ENCODE measurements at regions of chr17 and their contacts with region 1.

Region 1: GRCh38 chr17:42779936-42780850 is at the start of gene WNK4:
- DNase-seq: peak; percentile 98
- ATAC-seq: peak; percentile 88
- H3K4me3 ChIP-seq: peak within 1 kb of the TSS; percentile 87 to 99 (median 92)
- H3K27ac ChIP-seq: peak within 1 kb of the TSS; percentile 98
- H3K4me1 ChIP-seq: peaks cover 64% of the 10 kb centered on the region
- H3K27me3 ChIP-seq: no peaks in the 10 kb centered on the region; a peak in 1 of 5 replicates
- CTCF ChIP-seq: 0 out of 2 replicates have a peak, but pooled peaks have one; percentile 42
- EP300 ChIP-seq: peak in 1 of 2 experiments; percentile 92; a peak in 3 of 4 replicates
- POLR2A ChIP-seq: peak; percentile 90
- RAD21 ChIP-seq: peak; percentile 17
- total RNA-seq, gene WNK4: 1.5 and 2.7 TPM in 2 replicates

Region 2: GRCh38 chr17:42706732-42707131 is 73.5 kb before region 1 on chr17:
- CTCF ChIA-PET with region 1: no interaction called
- POLR2A ChIA-PET with region 1: no interaction called
- in situ Hi-C with region 1: no loop called
- intact Hi-C with region 1: no loop called
- DNase-seq: no peak
- ATAC-seq: no peak
- H3K4me3 ChIP-seq: no peak overlapping the region
- H3K27ac ChIP-seq: no peak overlapping the region
- H3K4me1 ChIP-seq: no peaks in the 10 kb centered on the region
- H3K27me3 ChIP-seq: no peaks in the 10 kb centered on the region
- CTCF ChIP-seq: no peak
- EP300 ChIP-seq: no peak
- POLR2A ChIP-seq: no peak
- RAD21 ChIP-seq: no peak

Region 3: DNA sequence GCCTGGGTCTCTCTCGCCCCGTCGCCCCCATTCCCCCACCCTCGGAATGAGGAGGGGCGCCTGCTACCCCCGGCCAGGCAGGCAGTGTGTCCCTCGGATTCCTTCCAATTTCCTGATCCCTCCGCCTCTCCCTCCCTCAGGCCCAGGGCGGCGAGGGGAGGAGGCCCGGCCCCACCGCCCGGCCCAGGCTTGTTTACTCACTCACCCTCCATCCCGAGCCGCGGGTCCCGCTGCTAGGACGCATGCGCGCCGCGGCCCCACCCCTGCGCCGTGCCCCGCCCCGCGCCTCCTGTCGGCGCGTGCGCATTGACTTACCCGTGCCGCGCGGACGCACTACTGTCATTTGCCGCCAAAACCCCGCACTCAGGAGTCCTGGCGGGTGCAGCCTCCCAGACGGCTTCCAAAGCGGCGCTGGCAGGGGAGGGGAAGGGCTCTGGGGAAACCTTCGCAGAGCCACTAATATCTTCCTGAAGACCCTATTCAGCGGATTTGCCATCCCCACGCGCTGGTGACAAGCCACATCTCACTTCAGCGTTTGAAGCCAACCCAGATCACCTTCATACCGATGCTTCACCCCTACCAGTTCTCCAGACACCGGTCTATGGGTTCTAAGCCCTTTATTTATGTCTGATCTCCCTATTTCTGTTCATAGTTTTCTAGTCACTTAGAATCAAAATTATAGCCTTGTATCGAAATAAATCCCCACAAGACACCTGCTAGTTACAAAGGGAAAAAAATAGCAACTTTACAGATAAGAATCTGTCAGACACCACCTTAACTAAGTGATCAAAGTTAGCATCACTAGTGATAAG is 35.2 kb before region 1 on chr17 and contains the start of gene EZH1:
- CTCF ChIA-PET with region 1: no interaction called
- POLR2A ChIA-PET with region 1: interaction called, 31 read pairs
- in situ Hi-C with region 1: no loop called
- intact Hi-C with region 1: no loop called
- DNase-seq: peak; percentile 91
- ATAC-seq: peak; percentile 89
- H3K4me3 ChIP-seq: peak within 1 kb of the TSS; percentile 58 to 84 (median 76)
- H3K27ac ChIP-seq: peak within 1 kb of the TSS; percentile 83
- H3K4me1 ChIP-seq: peaks cover 62% of the 10 kb centered on the region
- H3K27me3 ChIP-seq: no peaks in the 10 kb centered on the region
- CTCF ChIP-seq: no peak; the same call in 1 of the 2 replicates
- EP300 ChIP-seq: peak; percentile 3 to 45; a peak in 1 of 4 replicates
- POLR2A ChIP-seq: peak; percentile 62 to 64; a peak in 3 of 4 replicates
- RAD21 ChIP-seq: no peak
- total RNA-seq, gene EZH1: 6.0 and 11.6 TPM in 2 replicates

Region 4: GRCh38 chr17:42760652-42761581 is 19.3 kb before region 1 on chr17 and contains the start of gene RAMP2:
- CTCF ChIA-PET with region 1: no interaction called
- POLR2A ChIA-PET with region 1: interaction called, 63 read pairs
- in situ Hi-C with region 1: no loop called
- intact Hi-C with region 1: no loop called
- DNase-seq: no peak
- ATAC-seq: peak; percentile 58
- H3K4me3 ChIP-seq: peak within 1 kb of the TSS; percentile 53 to 75 (median 59)
- H3K27ac ChIP-seq: no peak within 1 kb of the TSS
- H3K4me1 ChIP-seq: peaks cover 53% of the 10 kb centered on the region
- H3K27me3 ChIP-seq: peaks cover 0 to 12% of the 10 kb centered on the region in 2 experiments; a peak in 2 of 5 replicates
- CTCF ChIP-seq: peak; percentile 1; the same call in 1 of the 2 replicates
- EP300 ChIP-seq: no peak
- POLR2A ChIP-seq: no peak
- RAD21 ChIP-seq: no peak
- total RNA-seq, gene RAMP2: 0.74 and 1.4 TPM in 2 replicates

Region 5: GRCh38 chr17:42798383-42799380 is 18.5 kb after region 1 on chr17 and contains the starts of genes CNTD1 and COA3:
- CTCF ChIA-PET with region 1: no interaction called
- POLR2A ChIA-PET with region 1: interaction called, 278 read pairs
- in situ Hi-C with region 1: no loop called
- intact Hi-C with region 1: loop called (anchors 2 kb)
- DNase-seq: peak; percentile 88
- ATAC-seq: peak; percentile 89
- H3K4me3 ChIP-seq: peak within 1 kb of the TSS; percentile 88 to 94 (median 94)
- H3K27ac ChIP-seq: peak within 1 kb of the TSS; percentile 88
- H3K4me1 ChIP-seq: peaks cover 58% of the 10 kb centered on the region
- H3K27me3 ChIP-seq: no peaks in the 10 kb centered on the region; a peak in 2 of 5 replicates
- CTCF ChIP-seq: peak; percentile 42
- EP300 ChIP-seq: peak in 1 of 2 experiments; percentile 34; a peak in 1 of 4 replicates
- POLR2A ChIP-seq: peak; percentile 77 to 92
- RAD21 ChIP-seq: peak; percentile 67
- total RNA-seq, gene CNTD1: 0.11 TPM in 1 of 2 replicates, not detected in the other
- total RNA-seq, gene COA3: 202 and 250 TPM in 2 replicates

Region 6: GRCh38 chr17:42832974-42833766 is 53.0 kb after region 1 on chr17 and contains the start of gene PSME3:
- CTCF ChIA-PET with region 1: no interaction called
- POLR2A ChIA-PET with region 1: interaction called, 28 read pairs
- in situ Hi-C with region 1: no loop called
- intact Hi-C with region 1: no loop called
- DNase-seq: peak; percentile 88
- ATAC-seq: peak; percentile 95
- H3K4me3 ChIP-seq: peak within 1 kb of the TSS; percentile 92 to 98 (median 92)
- H3K27ac ChIP-seq: peak within 1 kb of the TSS; percentile 90
- H3K4me1 ChIP-seq: peaks cover 40% of the 10 kb centered on the region
- H3K27me3 ChIP-seq: no peaks in the 10 kb centered on the region; a peak in 1 of 5 replicates
- CTCF ChIP-seq: peak; percentile 37
- EP300 ChIP-seq: peak in 1 of 2 experiments; percentile 26; a peak in 2 of 4 replicates
- POLR2A ChIP-seq: peak; percentile 93 to 97
- RAD21 ChIP-seq: peak; percentile 30; the same call in 1 of the 2 replicates
- total RNA-seq, gene PSME3: 135 and 202 TPM in 2 replicates

Measured in HepG2 (cell line).